PC-9 (cell line): ENCODE measurements at regions of chr1 and their contacts with region 1.

Region 1: DNA sequence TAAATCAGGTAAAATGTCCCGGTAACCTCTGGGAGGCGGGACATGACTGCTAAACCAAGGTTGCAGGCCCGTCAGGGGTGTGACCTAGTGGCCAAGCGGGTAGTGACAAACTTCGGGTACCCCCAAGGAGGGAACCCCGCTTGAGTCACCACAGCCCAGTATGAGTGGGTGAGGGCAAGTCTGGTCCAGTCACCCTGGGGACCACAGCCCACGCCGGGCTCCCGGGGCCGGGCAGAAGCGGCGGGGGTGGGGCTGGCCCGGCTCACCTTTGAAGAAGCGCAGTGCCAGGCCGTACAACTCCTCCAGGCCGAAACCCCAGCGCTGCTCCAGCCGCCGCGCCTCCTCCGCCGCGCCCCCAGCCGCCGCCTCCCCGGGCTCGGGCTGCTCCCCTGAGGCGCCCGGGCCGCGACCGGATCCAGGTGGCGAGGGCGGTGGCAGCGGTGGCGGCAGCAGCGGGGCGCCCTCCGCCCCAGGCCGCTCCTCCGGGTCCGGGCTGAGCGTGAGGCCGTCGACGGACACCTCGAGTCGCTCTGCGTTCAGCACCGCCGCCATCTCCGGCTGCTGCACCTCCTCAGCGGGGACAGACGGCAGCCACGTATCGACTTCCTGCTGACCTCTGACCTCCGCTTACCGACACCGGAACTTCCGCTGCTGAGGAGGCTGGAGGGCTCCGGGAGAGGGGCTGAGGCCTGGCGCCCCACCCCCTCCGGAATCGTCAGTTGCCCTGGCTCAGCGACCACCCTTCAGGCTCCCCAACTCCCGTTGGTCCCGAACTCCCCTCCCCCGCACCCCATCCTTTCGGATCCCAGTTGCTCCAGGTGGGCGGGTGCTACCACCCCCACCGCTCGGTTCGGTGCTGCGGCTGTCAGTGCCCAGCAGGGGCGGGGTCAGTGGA is at the start of gene ACBD3:
- DNase-seq: peak; percentile 76 to 82
- H3K4me3 ChIP-seq: peak within 1 kb of the TSS; percentile 98
- H3K27ac ChIP-seq: peak within 1 kb of the TSS; percentile 61
- H3K4me1 ChIP-seq: peaks cover 21% of the 10 kb centered on the region
- H3K27me3 ChIP-seq: no peaks in the 10 kb centered on the region
- CTCF ChIP-seq: no peak; the same call in 1 of the 2 replicates
- total RNA-seq, gene ACBD3: 39.3 and 46.4 TPM in 2 replicates

Region 2: DNA sequence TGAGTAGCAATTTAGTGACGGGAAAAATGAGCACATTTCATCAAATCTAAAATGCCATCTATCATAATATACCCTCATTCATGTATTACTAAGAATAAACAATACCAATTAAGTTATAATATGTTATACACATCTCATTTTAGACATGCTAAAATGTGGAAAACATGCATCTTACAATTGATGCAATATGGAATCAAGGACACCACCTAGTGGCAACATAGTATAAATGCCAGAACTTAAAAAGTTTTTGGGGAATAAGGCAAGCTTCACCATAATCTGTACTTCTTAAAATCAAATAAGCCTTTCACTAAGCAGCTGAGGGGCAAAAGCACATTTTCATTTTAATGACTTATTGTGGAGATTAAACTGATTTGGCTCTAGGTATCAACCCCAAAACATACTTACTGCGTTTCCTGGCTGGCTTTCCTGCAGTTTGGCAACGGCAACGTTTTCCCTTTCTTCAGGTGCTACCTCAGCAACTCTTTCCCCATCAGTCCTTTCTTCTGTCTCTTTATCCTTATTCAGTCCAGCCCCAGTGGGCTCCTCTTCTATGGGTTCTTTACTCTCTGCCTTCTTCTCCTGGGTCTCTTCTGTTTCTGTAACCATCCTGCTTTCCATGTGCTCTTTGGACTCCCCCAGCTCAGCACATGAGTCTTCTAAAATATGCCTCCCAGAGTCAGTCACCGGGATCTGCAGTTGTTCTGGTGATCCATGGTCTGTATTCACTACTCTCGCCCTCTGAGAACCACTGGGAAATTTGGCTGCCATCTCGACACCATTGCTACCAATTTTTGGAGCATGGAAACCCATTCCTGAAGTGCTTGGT is 198.7 kb before region 1 on chr1:
- CTCF ChIA-PET with region 1: no interaction called
- POLR2A ChIA-PET with region 1: no interaction called
- intact Hi-C with region 1: loop called (anchors 5 kb)
- DNase-seq: peak in 1 of 2 experiments; percentile 41
- H3K4me3 ChIP-seq: no peak overlapping the region
- H3K27ac ChIP-seq: no peak overlapping the region
- H3K4me1 ChIP-seq: no peaks in the 10 kb centered on the region
- H3K27me3 ChIP-seq: no peaks in the 10 kb centered on the region
- CTCF ChIP-seq: peak; percentile 84